BJ (cell line): ENCODE measurements at regions of chr1 and their contacts with region 1.

Region 1: GRCh38 chr1:24754229-24754628 is 9.0 kb downstream of the CLIC4 start:
- DNase-seq: no peak
- H3K4me3 ChIP-seq: no peak overlapping the region
- H3K27me3 ChIP-seq: no peaks in the 10 kb centered on the region
- CTCF ChIP-seq: no peak

Region 2: DNA sequence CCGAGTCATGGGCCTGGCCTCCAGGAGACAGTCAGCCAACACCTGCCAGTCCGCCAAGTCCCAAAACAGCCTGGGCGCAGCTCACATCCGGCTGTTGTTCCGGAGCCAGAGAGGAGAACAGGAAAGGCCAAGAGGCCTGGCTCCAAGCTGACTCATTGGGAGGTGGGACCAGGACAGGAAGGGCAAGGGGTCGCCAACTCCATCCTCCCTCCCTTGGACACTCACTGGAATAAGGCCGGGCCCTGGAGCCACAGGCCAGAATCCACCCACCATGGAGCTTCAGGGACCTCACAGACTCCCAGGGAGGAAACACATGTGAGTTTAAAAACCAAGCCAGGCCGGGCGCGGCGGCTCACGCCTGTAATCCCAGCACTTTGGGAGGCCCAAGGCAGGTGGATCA is 34.1 kb before region 1 on chr1:
- CTCF ChIA-PET with region 1: interaction called, 3 read pairs
- POLR2A ChIA-PET with region 1: interaction called, 10 read pairs
- DNase-seq: no peak
- H3K4me3 ChIP-seq: no peak overlapping the region
- H3K27me3 ChIP-seq: no peaks in the 10 kb centered on the region
- CTCF ChIP-seq: no peak